Body of pancreas (tissue), 4 donors: ENCODE measurements at regions of chr15 and their contacts with region 1.

Region 1: GRCh38 chr15:24734391-24734790 is 58.8 kb downstream of the NPAP1 start:
- DNase-seq: no peak
- ATAC-seq: no peak
- H3K4me3 ChIP-seq: no peak overlapping the region
- H3K27ac ChIP-seq: no peak overlapping the region
- H3K4me1 ChIP-seq: no peaks in the 10 kb centered on the region
- H3K27me3 ChIP-seq: no peaks in the 10 kb centered on the region
- CTCF ChIP-seq: no peak
- POLR2A ChIP-seq: no peak

Region 2: DNA sequence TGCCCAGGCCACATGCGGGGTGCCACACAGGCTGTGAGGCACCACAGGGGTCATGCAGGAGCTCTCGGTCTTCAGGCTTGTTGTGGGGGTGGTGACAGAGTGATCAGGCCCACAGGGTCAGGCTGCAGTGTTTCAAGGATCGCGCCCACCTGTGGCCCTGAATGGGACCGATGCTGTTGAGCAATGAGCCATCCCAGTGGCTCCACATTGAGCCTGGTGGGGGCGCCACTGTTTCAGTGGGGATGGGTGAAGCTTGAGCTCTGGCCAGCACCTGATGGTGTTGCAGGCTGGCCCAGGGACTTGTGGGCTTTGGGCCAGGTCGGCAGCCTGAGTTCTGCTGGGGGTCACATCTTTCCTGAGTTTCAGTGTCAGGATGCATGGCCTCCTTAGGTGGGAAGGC is 474.3 kb after region 1 on chr15:
- intact Hi-C with region 1: loop called (anchors 5 kb)
- DNase-seq: no peak
- ATAC-seq: no peak
- H3K4me3 ChIP-seq: no peak overlapping the region
- H3K27ac ChIP-seq: no peak overlapping the region
- H3K4me1 ChIP-seq: no peaks in the 10 kb centered on the region
- H3K27me3 ChIP-seq: no peaks in the 10 kb centered on the region
- CTCF ChIP-seq: no peak
- POLR2A ChIP-seq: no peak